GM12878 (cell line): ENCODE measurements at regions of chr2 and their contacts with region 1.

Region 1: DNA sequence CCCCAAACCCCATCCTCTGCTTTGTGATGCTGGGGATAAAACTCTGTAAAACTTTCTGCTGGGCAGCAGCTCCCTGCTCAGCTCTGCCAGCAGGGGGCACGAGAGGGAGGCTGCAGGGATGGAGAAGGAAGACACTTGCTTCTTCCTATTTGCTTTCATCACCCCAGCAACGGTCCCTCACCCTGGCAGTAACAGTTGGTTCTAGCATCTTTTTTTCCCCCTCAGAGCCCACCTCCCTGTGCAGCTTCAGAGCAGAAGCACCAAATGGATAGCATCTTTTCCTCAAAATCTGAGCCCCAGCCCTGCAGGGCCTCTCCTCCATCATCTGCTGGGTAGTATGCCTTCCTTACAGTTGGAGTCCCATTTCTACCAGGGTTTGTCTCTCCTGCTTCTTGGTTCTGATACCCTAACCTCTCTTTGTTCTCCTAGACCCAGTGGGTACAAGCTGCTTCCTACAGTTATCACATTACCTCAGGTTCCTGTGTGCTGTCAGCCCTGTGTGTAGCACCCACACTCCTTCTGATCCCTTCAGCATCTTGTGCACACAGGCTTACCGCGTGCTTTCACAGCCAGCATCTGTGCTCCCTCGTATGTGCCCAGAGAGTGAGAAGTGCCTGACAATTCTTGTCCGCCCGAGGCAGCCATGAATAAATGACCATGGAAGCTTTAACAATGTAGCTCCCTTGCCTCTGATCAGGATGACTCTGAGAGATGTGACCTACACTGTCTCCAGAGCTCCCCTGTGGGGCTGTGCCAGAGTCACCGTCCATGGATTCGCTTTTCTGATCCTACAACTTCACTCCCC is 14.5 kb downstream of the CKAP2L start:
- DNase-seq: no peak
- ATAC-seq: peak; percentile 95
- H3K4me3 ChIP-seq: no peak overlapping the region
- H3K27ac ChIP-seq: no peak overlapping the region
- H3K4me1 ChIP-seq: no peaks in the 10 kb centered on the region
- H3K27me3 ChIP-seq: no peaks in the 10 kb centered on the region
- CTCF ChIP-seq: peak; percentile 95 to 98 (median 98); a peak in 5 of 6 replicates
- EP300 ChIP-seq: no peak
- POLR2A ChIP-seq: no peak
- RAD21 ChIP-seq: peak; percentile 98

Region 2: GRCh38 chr2:112626604-112627059 is 123.3 kb before region 1 on chr2:
- CTCF ChIA-PET with region 1: interaction called, 11 read pairs
- POLR2A ChIA-PET with region 1: no interaction called
- RAD21 ChIA-PET with region 1: interaction called, 3 read pairs
- SMC1A ChIA-PET with region 1: interaction called, 9 read pairs
- in situ Hi-C with region 1: no loop called
- intact Hi-C with region 1: no loop called
- DNase-seq: no peak
- ATAC-seq: peak; percentile 86
- H3K4me3 ChIP-seq: no peak overlapping the region
- H3K27ac ChIP-seq: no peak overlapping the region
- H3K4me1 ChIP-seq: peaks cover 19% of the 10 kb centered on the region
- H3K27me3 ChIP-seq: no peaks in the 10 kb centered on the region
- CTCF ChIP-seq: peak; percentile 91 to 95 (median 92)
- EP300 ChIP-seq: no peak
- POLR2A ChIP-seq: no peak
- RAD21 ChIP-seq: peak; percentile 94

Region 3: DNA sequence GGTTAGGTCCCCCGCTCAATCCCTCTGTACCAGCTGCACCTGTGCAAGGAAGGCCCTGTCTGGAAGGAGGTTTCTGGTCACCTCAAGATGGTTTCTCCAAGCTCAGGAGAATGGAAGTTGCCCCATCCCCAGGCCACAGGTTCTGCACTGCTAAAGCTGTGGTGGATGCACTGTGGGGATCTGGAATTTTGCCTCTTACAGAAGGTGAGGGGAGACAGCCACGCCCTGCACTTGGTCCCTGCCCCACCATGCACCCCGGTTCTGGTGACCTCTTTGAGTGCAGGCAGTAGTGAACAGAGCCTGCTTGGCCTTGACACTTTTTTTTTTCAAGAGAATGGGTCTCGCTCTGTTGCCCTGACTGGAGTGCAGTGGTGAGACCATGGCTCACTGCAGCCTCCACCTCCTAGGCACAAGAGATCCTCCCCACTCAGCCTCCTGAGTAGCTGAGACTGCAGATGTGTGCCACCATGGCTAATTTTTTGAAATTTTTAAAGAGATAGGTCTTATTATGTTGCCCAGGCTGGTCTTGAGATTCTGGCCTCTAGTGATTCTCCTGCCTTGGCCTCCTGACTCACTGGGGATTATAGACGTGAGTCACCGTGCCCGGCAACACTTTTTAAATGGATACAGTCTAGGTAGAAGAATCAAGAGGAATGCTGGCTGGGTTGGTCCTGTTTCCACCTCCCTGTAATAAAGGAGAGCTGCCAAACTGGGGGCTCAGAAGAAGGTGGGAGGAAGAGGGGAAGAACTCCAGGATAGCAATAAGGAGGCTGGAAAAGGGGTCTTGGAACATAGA is 34.9 kb before region 1 on chr2:
- CTCF ChIA-PET with region 1: no interaction called
- POLR2A ChIA-PET with region 1: no interaction called
- RAD21 ChIA-PET with region 1: no interaction called
- SMC1A ChIA-PET with region 1: no interaction called
- in situ Hi-C with region 1: no loop called
- intact Hi-C with region 1: no loop called
- DNase-seq: no peak
- ATAC-seq: no peak
- H3K4me3 ChIP-seq: no peak overlapping the region
- H3K27ac ChIP-seq: no peak overlapping the region
- H3K4me1 ChIP-seq: peaks cover 6% of the 10 kb centered on the region
- H3K27me3 ChIP-seq: no peaks in the 10 kb centered on the region
- CTCF ChIP-seq: no peak
- EP300 ChIP-seq: no peak
- POLR2A ChIP-seq: no peak
- RAD21 ChIP-seq: no peak

Region 4: GRCh38 chr2:112764071-112765044 is 14.4 kb after region 1 on chr2 and contains the start of gene CKAP2L:
- CTCF ChIA-PET with region 1: interaction called, 63 read pairs
- POLR2A ChIA-PET with region 1: interaction called, 17 read pairs
- RAD21 ChIA-PET with region 1: interaction called, 15 read pairs
- SMC1A ChIA-PET with region 1: interaction called, 17 read pairs
- in situ Hi-C with region 1: no loop called
- intact Hi-C with region 1: no loop called
- DNase-seq: peak; percentile 94
- ATAC-seq: peak; percentile 98
- H3K4me3 ChIP-seq: peak within 1 kb of the TSS; percentile 81
- H3K27ac ChIP-seq: peak within 1 kb of the TSS; percentile 80
- H3K4me1 ChIP-seq: peaks cover 3% of the 10 kb centered on the region
- H3K27me3 ChIP-seq: no peaks in the 10 kb centered on the region
- CTCF ChIP-seq: no peak
- EP300 ChIP-seq: peak in 1 of 2 experiments; percentile 37; a peak in 1 of 4 replicates
- POLR2A ChIP-seq: peak; percentile 79
- RAD21 ChIP-seq: no peak; the same call in 1 of the 2 replicates
- polyA plus RNA-seq, gene CKAP2L: 10.5 to 19.7 TPM

Region 5: GRCh38 chr2:112794131-112794733 is 44.3 kb after region 1 on chr2:
- CTCF ChIA-PET with region 1: interaction called, 6 read pairs
- POLR2A ChIA-PET with region 1: interaction called, 5 read pairs
- RAD21 ChIA-PET with region 1: interaction called, 6 read pairs
- SMC1A ChIA-PET with region 1: interaction called, 10 read pairs
- in situ Hi-C with region 1: no loop called
- intact Hi-C with region 1: no loop called
- DNase-seq: no peak
- ATAC-seq: peak; percentile 83
- H3K4me3 ChIP-seq: no peak overlapping the region
- H3K27ac ChIP-seq: peak overlapping the region; percentile 64
- H3K4me1 ChIP-seq: peaks cover 13% of the 10 kb centered on the region
- H3K27me3 ChIP-seq: no peaks in the 10 kb centered on the region
- CTCF ChIP-seq: no peak
- EP300 ChIP-seq: no peak
- POLR2A ChIP-seq: no peak
- RAD21 ChIP-seq: no peak

Region 6: GRCh38 chr2:112836695-112837117 is 86.7 kb after region 1 on chr2 and contains the start of gene IL1B:
- CTCF ChIA-PET with region 1: interaction called, 5 read pairs
- POLR2A ChIA-PET with region 1: interaction called, 4 read pairs
- RAD21 ChIA-PET with region 1: interaction called, 11 read pairs
- SMC1A ChIA-PET with region 1: interaction called, 9 read pairs
- in situ Hi-C with region 1: no loop called
- intact Hi-C with region 1: no loop called
- DNase-seq: no peak
- ATAC-seq: peak; percentile 21
- H3K4me3 ChIP-seq: no peak within 1 kb of the TSS
- H3K27ac ChIP-seq: no peak within 1 kb of the TSS
- H3K4me1 ChIP-seq: peaks cover 34% of the 10 kb centered on the region
- H3K27me3 ChIP-seq: no peaks in the 10 kb centered on the region
- CTCF ChIP-seq: no peak
- EP300 ChIP-seq: no peak
- POLR2A ChIP-seq: no peak
- RAD21 ChIP-seq: no peak
- polyA plus RNA-seq, gene IL1B: 0.57 to 1.6 TPM

Region 7: DNA sequence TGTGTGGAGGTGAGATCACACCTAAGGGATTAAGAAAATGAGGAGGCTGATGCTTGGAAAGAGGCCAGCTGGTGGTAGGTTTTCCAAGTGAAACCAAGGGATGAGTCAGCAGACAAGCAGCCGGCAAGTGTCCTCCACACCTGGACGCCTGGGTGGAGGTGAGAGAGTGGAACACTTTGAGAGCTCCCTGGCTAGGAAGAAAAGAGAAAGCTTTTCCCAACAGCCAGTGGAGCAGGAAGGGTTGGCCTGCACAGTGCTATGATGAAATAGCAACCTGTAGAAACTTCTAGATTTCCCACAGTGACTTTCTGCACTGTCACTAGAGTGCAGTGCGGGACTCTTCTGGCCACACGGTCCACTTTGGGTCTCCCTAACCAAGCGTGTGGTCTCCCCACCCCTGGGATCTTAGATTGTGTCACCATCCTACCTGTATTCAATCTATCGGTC is 141.5 kb after region 1 on chr2:
- CTCF ChIA-PET with region 1: interaction called, 496 read pairs
- POLR2A ChIA-PET with region 1: no interaction called
- RAD21 ChIA-PET with region 1: interaction called, 281 read pairs
- SMC1A ChIA-PET with region 1: interaction called, 362 read pairs
- in situ Hi-C with region 1: no loop called
- intact Hi-C with region 1: no loop called
- DNase-seq: no peak
- ATAC-seq: no peak
- H3K4me3 ChIP-seq: no peak overlapping the region
- H3K27ac ChIP-seq: no peak overlapping the region
- H3K4me1 ChIP-seq: peaks cover 8% of the 10 kb centered on the region
- H3K27me3 ChIP-seq: no peaks in the 10 kb centered on the region
- CTCF ChIP-seq: no peak
- EP300 ChIP-seq: no peak
- POLR2A ChIP-seq: no peak
- RAD21 ChIP-seq: no peak

Region 8: GRCh38 chr2:112920923-112921532 is 171.1 kb after region 1 on chr2:
- CTCF ChIA-PET with region 1: interaction called, 10 read pairs
- POLR2A ChIA-PET with region 1: no interaction called
- RAD21 ChIA-PET with region 1: interaction called, 3 read pairs
- SMC1A ChIA-PET with region 1: interaction called, 12 read pairs
- in situ Hi-C with region 1: no loop called
- intact Hi-C with region 1: no loop called
- DNase-seq: no peak
- ATAC-seq: no peak
- H3K4me3 ChIP-seq: no peak overlapping the region
- H3K27ac ChIP-seq: no peak overlapping the region
- H3K4me1 ChIP-seq: peaks cover 5% of the 10 kb centered on the region
- H3K27me3 ChIP-seq: peaks cover 2 to 3% of the 10 kb centered on the region in 2 experiments; a peak in 2 of 4 replicates
- CTCF ChIP-seq: no peak
- EP300 ChIP-seq: no peak
- POLR2A ChIP-seq: no peak
- RAD21 ChIP-seq: no peak